K562 (cell line): ENCODE measurements at regions of chr1 and their contacts with region 1.

Region 1: GRCh38 chr1:156212833-156213643 is at the start of gene PMF1:
- DNase-seq: peak; percentile 97 to 99 (median 98)
- ATAC-seq: peak; percentile 98
- H3K4me3 ChIP-seq: peak within 1 kb of the TSS; percentile 78
- H3K27ac ChIP-seq: peak within 1 kb of the TSS; percentile 100
- H3K4me1 ChIP-seq: peaks cover 11 to 17% of the 10 kb centered on the region in 2 experiments; a peak in 4 of 5 replicates
- H3K27me3 ChIP-seq: no peaks in the 10 kb centered on the region
- CTCF ChIP-seq: no peak
- EP300 ChIP-seq: no peak
- POLR2A ChIP-seq: peak; percentile 98
- RAD21 ChIP-seq: no peak
- polyA plus RNA-seq, gene PMF1: 9.4 to 18.9 TPM

Region 2: DNA sequence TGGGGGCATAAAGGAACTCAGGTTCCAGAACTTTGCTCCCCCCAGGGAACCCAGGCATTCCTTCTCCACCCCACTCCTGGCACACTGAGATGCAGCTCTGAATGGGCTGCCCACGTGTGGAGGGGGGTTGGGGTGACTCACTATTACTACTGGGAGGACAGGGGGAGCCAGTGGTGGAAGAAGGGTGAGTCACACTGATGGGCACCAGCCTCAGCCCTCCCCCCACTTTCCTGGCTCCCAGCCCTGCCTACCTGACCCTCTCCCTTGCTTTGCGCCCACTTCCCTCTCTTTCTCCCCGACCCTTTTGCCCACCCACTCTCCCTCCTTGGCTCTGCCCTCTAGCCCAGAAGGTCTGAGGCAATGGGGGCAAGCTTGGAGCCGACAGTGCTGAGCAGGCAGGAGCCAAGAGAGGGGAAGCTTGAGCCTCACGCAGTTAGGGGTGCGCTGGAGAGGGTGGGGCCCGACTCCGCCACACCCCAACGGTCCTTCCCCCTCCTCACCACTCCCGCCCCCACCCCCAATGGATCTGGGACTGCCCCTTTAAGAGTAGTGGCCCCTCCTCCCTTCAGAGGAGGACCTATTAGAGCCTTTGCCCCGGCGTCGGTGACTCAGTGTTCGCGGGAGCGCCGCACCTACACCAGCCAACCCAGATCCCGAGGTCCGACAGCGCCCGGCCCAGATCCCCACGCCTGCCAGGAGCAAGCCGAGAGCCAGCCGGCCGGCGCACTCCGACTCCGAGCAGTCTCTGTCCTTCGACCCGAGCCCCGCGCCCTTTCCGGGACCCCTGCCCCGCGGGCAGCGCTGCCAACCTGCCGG is 98.7 kb before region 1 on chr1 and contains the start of gene LMNA:
- CTCF ChIA-PET with region 1: no interaction called
- POLR2A ChIA-PET with region 1: interaction called, 13 read pairs
- in situ Hi-C with region 1: no loop called
- intact Hi-C with region 1: no loop called
- DNase-seq: peak; percentile 90 to 94 (median 92)
- ATAC-seq: peak; percentile 91
- H3K4me3 ChIP-seq: peak within 1 kb of the TSS; percentile 73
- H3K27ac ChIP-seq: peak within 1 kb of the TSS; percentile 92
- H3K4me1 ChIP-seq: peaks cover 24 to 41% of the 10 kb centered on the region in 2 experiments
- H3K27me3 ChIP-seq: no peaks in the 10 kb centered on the region
- CTCF ChIP-seq: 0 out of 6 replicates have a peak, but pooled peaks of 1 of the 3 experiments have one; percentile 5
- EP300 ChIP-seq: 0 out of 2 replicates have a peak, but pooled peaks have one; percentile 25
- POLR2A ChIP-seq: peak; percentile 87
- RAD21 ChIP-seq: no peak
- polyA plus RNA-seq, gene LMNA: 1.00 to 4.5 TPM

Region 3: GRCh38 chr1:156146020-156146768 is 66.8 kb before region 1 on chr1:
- CTCF ChIA-PET with region 1: no interaction called
- POLR2A ChIA-PET with region 1: interaction called, 10 read pairs
- in situ Hi-C with region 1: no loop called
- intact Hi-C with region 1: loop called (anchors 5 kb)
- DNase-seq: peak; percentile 66 to 80 (median 72)
- ATAC-seq: peak; percentile 87
- H3K4me3 ChIP-seq: no peak overlapping the region
- H3K27ac ChIP-seq: no peak overlapping the region
- H3K4me1 ChIP-seq: peaks cover 5 to 13% of the 10 kb centered on the region in 2 experiments; a peak in 4 of 5 replicates
- H3K27me3 ChIP-seq: peaks cover 3 to 8% of the 10 kb centered on the region in 2 experiments; a peak in 1 of 5 replicates
- CTCF ChIP-seq: peak; percentile 78 to 93 (median 82)
- EP300 ChIP-seq: 0 out of 2 replicates have a peak, but pooled peaks have one; percentile 10
- POLR2A ChIP-seq: no peak
- RAD21 ChIP-seq: peak; percentile 86 to 94

Region 4: DNA sequence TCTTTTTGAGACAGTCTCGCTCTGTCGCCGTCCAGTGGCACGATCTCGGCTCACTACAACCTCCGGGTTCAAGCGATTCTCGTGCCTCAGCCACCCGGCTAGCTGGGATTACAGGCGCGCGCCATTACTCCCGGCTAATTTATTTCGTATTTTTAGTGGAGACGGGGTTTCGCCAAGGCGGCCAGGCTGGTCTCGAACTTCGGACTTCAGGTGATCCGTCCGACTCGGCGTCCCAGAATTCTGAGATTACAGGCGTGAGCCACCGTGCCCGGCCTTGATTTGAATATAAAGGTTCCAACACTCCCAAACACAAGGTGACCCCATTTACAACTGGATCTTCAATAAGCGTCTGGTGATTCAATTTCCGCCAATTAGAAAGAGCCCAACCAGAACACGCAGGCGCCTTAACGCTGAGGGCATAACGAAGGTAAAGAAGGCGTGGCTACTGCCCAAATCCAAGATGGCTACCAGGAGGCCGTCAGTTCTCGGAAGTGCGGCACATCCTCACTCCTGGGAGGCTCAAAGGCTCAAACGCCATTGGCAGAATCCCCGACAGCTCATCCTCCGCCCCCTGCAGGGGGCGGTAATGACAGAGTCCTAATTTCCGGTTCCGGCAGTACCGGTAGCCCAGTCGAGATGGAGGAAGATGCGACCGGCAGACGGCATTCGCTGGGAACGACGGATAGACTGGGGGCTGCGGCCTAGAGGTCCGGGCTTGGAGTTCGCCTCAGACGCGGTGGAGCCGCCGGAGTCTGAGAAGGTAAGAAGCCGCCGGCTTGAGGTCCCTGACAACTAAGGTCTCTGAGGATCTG is 19.3 kb before region 1 on chr1 and contains the start of gene SLC25A44:
- CTCF ChIA-PET with region 1: no interaction called
- POLR2A ChIA-PET with region 1: interaction called, 62 read pairs
- in situ Hi-C with region 1: no loop called
- intact Hi-C with region 1: loop called (anchors 2 kb)
- DNase-seq: peak; percentile 95 to 99 (median 96)
- ATAC-seq: peak; percentile 99
- H3K4me3 ChIP-seq: peak within 1 kb of the TSS; percentile 71
- H3K27ac ChIP-seq: peak within 1 kb of the TSS; percentile 82
- H3K4me1 ChIP-seq: peaks cover 6 to 12% of the 10 kb centered on the region in 2 experiments
- H3K27me3 ChIP-seq: no peaks in the 10 kb centered on the region
- CTCF ChIP-seq: peak; percentile 61 to 68 (median 61)
- EP300 ChIP-seq: 0 out of 2 replicates have a peak, but pooled peaks have one; percentile 12
- POLR2A ChIP-seq: peak; percentile 90
- RAD21 ChIP-seq: no peak
- polyA plus RNA-seq, gene SLC25A44: 4.4 to 7.5 TPM

Region 5: GRCh38 chr1:156198831-156199349 is 14.1 kb before region 1 on chr1:
- CTCF ChIA-PET with region 1: no interaction called
- POLR2A ChIA-PET with region 1: interaction called, 62 read pairs
- in situ Hi-C with region 1: no loop called
- intact Hi-C with region 1: no loop called
- DNase-seq: peak in 1 of 4 experiments; percentile 4
- ATAC-seq: no peak
- H3K4me3 ChIP-seq: no peak overlapping the region
- H3K27ac ChIP-seq: no peak overlapping the region
- H3K4me1 ChIP-seq: peaks cover 5 to 6% of the 10 kb centered on the region in 2 experiments; a peak in 4 of 5 replicates
- H3K27me3 ChIP-seq: no peaks in the 10 kb centered on the region
- CTCF ChIP-seq: no peak
- EP300 ChIP-seq: no peak
- POLR2A ChIP-seq: no peak
- RAD21 ChIP-seq: no peak

Region 6: GRCh38 chr1:156226116-156226538 is 13.1 kb after region 1 on chr1:
- CTCF ChIA-PET with region 1: no interaction called
- POLR2A ChIA-PET with region 1: interaction called, 19 read pairs
- in situ Hi-C with region 1: no loop called
- intact Hi-C with region 1: no loop called
- DNase-seq: no peak
- ATAC-seq: no peak
- H3K4me3 ChIP-seq: no peak overlapping the region
- H3K27ac ChIP-seq: no peak overlapping the region
- H3K4me1 ChIP-seq: peaks cover 3 to 7% of the 10 kb centered on the region in 2 experiments; a peak in 3 of 5 replicates
- H3K27me3 ChIP-seq: no peaks in the 10 kb centered on the region
- CTCF ChIP-seq: no peak
- EP300 ChIP-seq: no peak
- POLR2A ChIP-seq: no peak
- RAD21 ChIP-seq: no peak

Region 7: DNA sequence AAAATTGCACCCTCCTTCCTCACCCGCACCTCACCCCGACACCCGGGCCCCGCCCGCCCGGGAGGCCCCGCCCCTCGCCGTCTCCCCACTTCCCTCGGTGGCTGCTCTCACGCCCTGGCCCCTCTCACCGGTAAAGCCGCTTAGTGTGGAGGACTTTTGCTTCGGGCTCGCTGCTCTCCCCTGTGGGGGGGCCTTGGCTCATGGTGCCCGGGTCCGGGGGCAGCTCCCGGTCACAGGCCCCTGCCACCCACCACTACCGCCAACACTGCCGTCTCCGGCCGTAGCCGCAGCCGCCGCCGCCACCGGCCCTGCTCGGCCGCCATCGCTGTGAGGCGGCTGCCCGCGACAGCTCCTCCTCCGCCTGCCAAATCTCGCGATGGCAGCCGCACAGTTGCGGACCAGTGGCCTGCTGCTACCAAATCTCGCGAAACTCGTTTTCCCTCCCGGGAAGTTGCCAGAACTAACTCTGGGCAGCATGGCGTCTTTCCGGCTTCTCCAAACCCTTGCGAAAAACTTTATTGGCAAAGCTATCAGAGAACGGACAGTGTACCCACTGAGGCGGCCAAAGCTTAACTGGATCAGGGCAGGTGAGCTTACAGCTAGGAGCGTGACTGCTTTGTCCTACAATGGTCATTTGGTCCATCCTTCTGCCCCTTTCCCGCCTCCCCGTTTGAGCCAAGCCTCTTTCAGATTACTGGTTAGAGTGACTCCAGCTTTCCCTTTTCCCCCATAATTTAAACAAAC is 69.6 kb after region 1 on chr1 and contains the start of gene SMG5:
- CTCF ChIA-PET with region 1: no interaction called
- POLR2A ChIA-PET with region 1: interaction called, 13 read pairs
- in situ Hi-C with region 1: no loop called
- intact Hi-C with region 1: no loop called
- DNase-seq: peak; percentile 91 to 98 (median 92)
- ATAC-seq: peak; percentile 96
- H3K4me3 ChIP-seq: peak within 1 kb of the TSS; percentile 97
- H3K27ac ChIP-seq: peak within 1 kb of the TSS; percentile 93
- H3K4me1 ChIP-seq: peaks cover 6 to 10% of the 10 kb centered on the region in 2 experiments; a peak in 4 of 5 replicates
- H3K27me3 ChIP-seq: no peaks in the 10 kb centered on the region
- CTCF ChIP-seq: peak in 1 of 3 experiments; percentile 39; a peak in 2 of 6 replicates
- EP300 ChIP-seq: peak; percentile 52; the same call in 1 of the 2 replicates
- POLR2A ChIP-seq: peak; percentile 98
- RAD21 ChIP-seq: no peak
- polyA plus RNA-seq, gene SMG5: 1.4 to 1.6 TPM